Caco-2 (cell line): ENCODE measurements at regions of chr22 and their contacts with region 1.

Region 1: DNA sequence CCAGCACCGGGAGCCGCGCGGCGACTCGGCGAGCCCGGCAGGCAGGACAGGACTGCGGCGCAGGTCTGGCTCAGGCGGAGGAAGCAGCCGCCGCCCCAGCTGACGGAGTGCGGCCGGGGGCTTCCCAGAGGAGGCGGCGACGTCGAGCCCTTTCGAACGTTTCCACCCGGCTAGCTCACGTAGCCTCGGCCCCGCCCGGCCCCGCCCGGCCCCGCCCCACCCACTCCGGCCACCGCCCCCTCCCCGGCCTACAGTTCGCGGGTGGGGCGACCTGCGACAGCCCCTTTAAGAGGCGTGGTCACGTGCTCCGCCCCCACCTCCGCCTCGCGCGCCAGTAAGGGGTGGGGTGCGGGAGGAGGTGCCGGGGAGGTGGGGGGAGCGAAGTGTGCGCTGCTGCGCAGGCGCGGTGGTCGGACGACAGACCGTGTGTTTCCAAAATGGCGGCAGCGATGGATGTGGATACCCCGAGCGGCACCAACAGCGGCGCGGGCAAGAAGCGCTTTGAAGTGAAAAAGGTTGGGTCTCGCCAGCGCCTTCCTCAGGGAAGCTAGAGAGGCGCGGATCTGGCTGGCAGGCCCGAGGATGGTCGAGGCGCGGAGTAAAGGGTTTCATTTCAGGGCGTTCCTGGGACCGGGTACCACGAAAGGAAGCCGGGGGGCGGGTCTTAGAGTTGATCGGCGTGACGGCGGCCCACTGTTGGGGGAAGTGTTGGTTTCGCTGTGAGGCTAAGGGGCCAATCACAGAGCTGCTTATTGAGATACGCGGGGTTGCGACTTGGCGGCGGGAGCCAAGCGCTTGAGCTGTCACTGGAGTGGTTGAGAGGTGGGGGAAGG is at the start of gene RBX1:
- DNase-seq: peak; percentile 97 to 98
- H3K4me3 ChIP-seq: peak within 1 kb of the TSS; percentile 90
- H3K4me3 Mint-ChIP-seq: peak within 1 kb of the TSS; percentile 100
- H3K27ac Mint-ChIP-seq: peak within 1 kb of the TSS; percentile 100
- H3K4me1 ChIP-seq: no peaks in the 10 kb centered on the region
- H3K4me1 Mint-ChIP-seq: peaks cover 14% of the 10 kb centered on the region
- H3K27me3 ChIP-seq: no peaks in the 10 kb centered on the region
- H3K27me3 Mint-ChIP-seq: no peaks in the 10 kb centered on the region
- CTCF ChIP-seq: no peak
- total RNA-seq, gene RBX1: 69.1 and 70.0 TPM in 2 replicates

Region 2: GRCh38 chr22:40844951-40845350 is 106.2 kb before region 1 on chr22:
- CTCF ChIA-PET with region 1: no interaction called
- POLR2A ChIA-PET with region 1: no interaction called
- intact Hi-C with region 1: no loop called
- DNase-seq: no peak
- H3K4me3 ChIP-seq: no peak overlapping the region
- H3K4me3 Mint-ChIP-seq: no peak overlapping the region
- H3K27ac Mint-ChIP-seq: no peak overlapping the region
- H3K4me1 ChIP-seq: no peaks in the 10 kb centered on the region
- H3K4me1 Mint-ChIP-seq: peaks cover 6% of the 10 kb centered on the region
- H3K27me3 ChIP-seq: no peaks in the 10 kb centered on the region
- H3K27me3 Mint-ChIP-seq: no peaks in the 10 kb centered on the region
- CTCF ChIP-seq: no peak

Region 3: DNA sequence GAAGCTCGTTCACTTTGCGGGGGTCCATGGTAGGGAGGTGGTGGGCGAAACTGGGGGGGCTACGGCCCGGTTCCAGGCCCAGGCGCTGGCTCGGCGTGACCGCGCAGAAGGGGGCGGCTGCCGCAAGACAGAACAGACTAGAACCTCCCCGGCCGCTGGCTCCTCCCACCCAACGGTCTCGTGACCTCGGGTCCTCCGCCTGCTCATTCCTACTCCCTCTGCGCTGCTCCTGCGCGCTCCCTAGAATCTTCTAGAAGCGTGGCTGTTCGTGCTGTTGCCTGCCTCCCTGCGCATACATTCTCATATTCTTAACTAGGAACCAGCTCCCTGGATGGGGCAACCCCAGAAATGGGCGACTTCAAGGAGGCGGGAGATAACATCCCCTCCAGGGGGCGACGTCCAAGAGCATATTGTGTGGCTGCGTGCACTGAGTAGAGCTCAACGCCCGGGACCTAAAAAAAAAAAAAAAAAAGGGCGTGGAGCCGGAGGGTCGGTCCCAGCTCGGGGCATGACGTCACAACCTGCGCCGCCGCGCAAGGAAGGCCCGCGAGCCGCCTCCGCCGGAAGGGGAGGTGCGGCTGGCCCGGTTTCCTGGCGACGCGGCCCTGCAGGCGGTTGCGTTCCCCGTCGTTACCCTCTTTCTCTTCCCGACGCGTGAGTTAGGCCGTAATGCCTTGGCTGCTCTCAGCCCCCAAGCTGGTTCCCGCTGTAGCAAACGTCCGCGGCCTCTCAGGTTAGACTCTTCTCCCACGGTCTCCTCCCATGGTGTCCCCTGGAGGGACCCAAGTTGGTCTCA is 94.5 kb before region 1 on chr22 and contains the starts of genes ST13 and XPNPEP3:
- CTCF ChIA-PET with region 1: no interaction called
- POLR2A ChIA-PET with region 1: interaction called, 19 read pairs
- intact Hi-C with region 1: no loop called
- DNase-seq: peak; percentile 97
- H3K4me3 ChIP-seq: peak within 1 kb of the TSS; percentile 56
- H3K4me3 Mint-ChIP-seq: peak within 1 kb of the TSS; percentile 98
- H3K27ac Mint-ChIP-seq: peak within 1 kb of the TSS; percentile 100
- H3K4me1 ChIP-seq: peaks cover 37% of the 10 kb centered on the region
- H3K4me1 Mint-ChIP-seq: peaks cover 6% of the 10 kb centered on the region
- H3K27me3 ChIP-seq: no peaks in the 10 kb centered on the region
- H3K27me3 Mint-ChIP-seq: no peaks in the 10 kb centered on the region
- CTCF ChIP-seq: peak in 1 of 2 experiments; percentile 31
- total RNA-seq, gene ST13: 364 and 385 TPM in 2 replicates
- total RNA-seq, gene XPNPEP3: 32.4 and 35.4 TPM in 2 replicates

Region 4: GRCh38 chr22:40922484-40923303 is 28.5 kb before region 1 on chr22:
- CTCF ChIA-PET with region 1: interaction called, 11 read pairs
- POLR2A ChIA-PET with region 1: interaction called, 13 read pairs
- intact Hi-C with region 1: no loop called
- DNase-seq: peak in 1 of 2 experiments; percentile 56
- H3K4me3 ChIP-seq: no peak overlapping the region
- H3K4me3 Mint-ChIP-seq: no peak overlapping the region
- H3K27ac Mint-ChIP-seq: peak overlapping the region; percentile 34
- H3K4me1 ChIP-seq: no peaks in the 10 kb centered on the region
- H3K4me1 Mint-ChIP-seq: no peaks in the 10 kb centered on the region
- H3K27me3 ChIP-seq: no peaks in the 10 kb centered on the region
- H3K27me3 Mint-ChIP-seq: no peaks in the 10 kb centered on the region
- CTCF ChIP-seq: peak; percentile 52 to 66

Region 5: DNA sequence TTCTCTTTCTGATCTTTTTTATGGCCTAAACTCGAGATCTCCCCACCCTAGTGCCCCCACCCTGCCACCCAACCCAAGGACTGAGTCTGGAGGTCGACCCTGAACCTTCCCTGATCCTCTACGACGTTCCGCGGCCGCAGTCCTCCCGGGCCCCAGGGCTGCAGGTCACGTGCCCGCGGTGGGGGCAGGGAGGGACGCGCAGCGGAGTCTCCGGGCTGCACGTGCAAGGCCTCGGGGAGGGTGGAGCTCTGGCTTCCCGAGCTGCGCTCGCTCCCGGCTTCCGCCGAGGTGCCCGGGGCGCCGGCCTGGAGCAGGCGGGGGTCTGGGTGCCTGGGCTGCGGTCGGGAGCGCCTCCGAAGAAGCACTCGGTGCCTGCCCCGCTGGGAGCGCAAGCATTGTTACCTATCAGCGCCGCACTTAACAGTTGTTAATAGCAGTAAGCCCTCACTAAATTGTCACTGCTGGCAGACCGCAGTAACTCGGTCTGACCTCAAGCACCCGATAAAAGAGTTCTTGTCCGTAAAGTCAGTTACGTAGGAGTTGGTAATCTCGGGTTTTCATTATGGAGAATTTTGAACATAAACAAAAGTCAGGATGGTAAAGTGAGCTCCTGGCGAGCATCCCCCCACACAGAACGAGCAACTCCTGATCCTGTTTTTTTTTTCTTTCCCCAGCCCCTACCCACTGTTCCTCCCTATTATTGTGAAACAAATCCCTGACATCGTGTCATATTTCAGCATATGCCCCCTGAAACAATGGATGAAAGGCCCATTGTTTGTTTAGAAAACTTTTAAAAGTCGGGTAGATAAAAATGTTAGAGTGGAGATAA is 71.5 kb after region 1 on chr22:
- CTCF ChIA-PET with region 1: no interaction called
- POLR2A ChIA-PET with region 1: interaction called, 45 read pairs
- intact Hi-C with region 1: loop called (anchors 1 kb)
- DNase-seq: peak; percentile 96 to 98
- H3K4me3 ChIP-seq: peak overlapping the region; percentile 81
- H3K4me3 Mint-ChIP-seq: peak overlapping the region; percentile 99
- H3K27ac Mint-ChIP-seq: peak overlapping the region; percentile 100
- H3K4me1 ChIP-seq: peaks cover 4% of the 10 kb centered on the region; the same call in 1 of the 2 replicates
- H3K4me1 Mint-ChIP-seq: peaks cover 15% of the 10 kb centered on the region
- H3K27me3 ChIP-seq: no peaks in the 10 kb centered on the region; the same call in 1 of the 2 replicates
- H3K27me3 Mint-ChIP-seq: no peaks in the 10 kb centered on the region
- CTCF ChIP-seq: no peak

Region 6: GRCh38 chr22:41048791-41049717 is 97.9 kb after region 1 on chr22:
- CTCF ChIA-PET with region 1: interaction called, 3 read pairs
- POLR2A ChIA-PET with region 1: interaction called, 12 read pairs
- intact Hi-C with region 1: no loop called
- DNase-seq: peak; percentile 88 to 90
- H3K4me3 ChIP-seq: peak overlapping the region; percentile 9
- H3K4me3 Mint-ChIP-seq: peak overlapping the region; percentile 73
- H3K27ac Mint-ChIP-seq: peak overlapping the region; percentile 58
- H3K4me1 ChIP-seq: peaks cover 31% of the 10 kb centered on the region
- H3K4me1 Mint-ChIP-seq: peaks cover 14% of the 10 kb centered on the region
- H3K27me3 ChIP-seq: no peaks in the 10 kb centered on the region
- H3K27me3 Mint-ChIP-seq: no peaks in the 10 kb centered on the region
- CTCF ChIP-seq: no peak

Region 7: DNA sequence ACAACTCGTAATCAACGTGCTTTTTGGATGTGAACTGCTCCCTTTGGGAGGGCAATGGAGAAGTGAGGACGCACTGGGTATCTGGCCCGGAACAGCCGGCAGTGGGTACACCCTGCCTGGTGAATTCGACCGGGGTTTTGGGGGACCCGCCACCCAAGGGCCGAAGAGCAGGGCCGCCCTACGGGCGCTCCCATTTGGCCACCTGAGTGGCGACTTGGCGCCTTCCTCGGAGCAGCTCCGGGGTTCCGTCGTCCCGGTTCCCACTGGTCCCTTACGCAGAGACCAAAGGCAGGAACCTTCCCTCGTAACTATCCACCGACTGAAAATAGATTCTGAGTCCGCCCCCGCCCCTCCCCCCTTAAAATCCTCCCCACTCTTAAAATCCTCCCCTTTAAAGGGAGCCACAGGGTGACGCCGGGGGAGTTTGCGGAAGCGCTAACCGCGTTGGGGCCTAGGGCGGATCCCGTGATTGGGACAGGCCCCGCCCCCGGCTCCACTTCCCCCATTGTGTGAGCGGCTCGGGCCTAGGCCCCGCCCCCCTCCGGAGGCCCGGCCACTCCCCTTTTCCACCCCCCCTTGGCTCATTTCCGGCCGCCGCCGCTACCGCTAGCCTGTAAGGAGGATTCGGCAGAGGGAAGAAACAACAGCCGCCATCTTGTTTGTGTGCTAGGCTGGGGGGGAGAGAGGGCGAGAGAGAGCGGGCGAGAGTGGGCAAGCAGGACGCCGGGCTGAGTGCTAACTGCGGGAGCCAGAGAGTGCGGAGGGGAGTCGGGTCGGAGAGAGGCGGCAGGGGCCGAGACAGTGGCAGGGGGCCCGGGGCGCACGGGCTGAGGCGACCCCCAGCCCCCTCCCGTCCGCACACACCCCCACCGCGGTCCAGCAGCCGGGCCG is 140.2 kb after region 1 on chr22:
- CTCF ChIA-PET with region 1: no interaction called
- POLR2A ChIA-PET with region 1: interaction called, 29 read pairs
- intact Hi-C with region 1: loop called (anchors 1 kb)
- DNase-seq: peak; percentile 97 to 98
- H3K4me3 ChIP-seq: peak overlapping the region; percentile 97
- H3K4me3 Mint-ChIP-seq: peak overlapping the region; percentile 79
- H3K27ac Mint-ChIP-seq: peak overlapping the region; percentile 96
- H3K4me1 ChIP-seq: 0 out of 2 replicates have a peak, but pooled peaks cover 3% of the 10 kb centered on the region
- H3K4me1 Mint-ChIP-seq: peaks cover 6% of the 10 kb centered on the region
- H3K27me3 ChIP-seq: no peaks in the 10 kb centered on the region
- H3K27me3 Mint-ChIP-seq: no peaks in the 10 kb centered on the region
- CTCF ChIP-seq: no peak